SK-N-SH (cell line): ENCODE measurements at regions of chr1 and their contacts with region 1.

Region 1: GRCh38 chr1:23657659-23658275 is 33.8 kb upstream of the RPL11 start:
- DNase-seq: peak; percentile 79
- H3K4me3 ChIP-seq: peak overlapping the region in 1 of 2 experiments; percentile 43; a peak in 1 of 4 replicates
- H3K27ac ChIP-seq: no peak overlapping the region
- H3K4me1 ChIP-seq: no peaks in the 10 kb centered on the region
- H3K27me3 ChIP-seq: no peaks in the 10 kb centered on the region
- CTCF ChIP-seq: peak; percentile 89
- EP300 ChIP-seq: no peak
- RAD21 ChIP-seq: peak; percentile 60

Region 2: DNA sequence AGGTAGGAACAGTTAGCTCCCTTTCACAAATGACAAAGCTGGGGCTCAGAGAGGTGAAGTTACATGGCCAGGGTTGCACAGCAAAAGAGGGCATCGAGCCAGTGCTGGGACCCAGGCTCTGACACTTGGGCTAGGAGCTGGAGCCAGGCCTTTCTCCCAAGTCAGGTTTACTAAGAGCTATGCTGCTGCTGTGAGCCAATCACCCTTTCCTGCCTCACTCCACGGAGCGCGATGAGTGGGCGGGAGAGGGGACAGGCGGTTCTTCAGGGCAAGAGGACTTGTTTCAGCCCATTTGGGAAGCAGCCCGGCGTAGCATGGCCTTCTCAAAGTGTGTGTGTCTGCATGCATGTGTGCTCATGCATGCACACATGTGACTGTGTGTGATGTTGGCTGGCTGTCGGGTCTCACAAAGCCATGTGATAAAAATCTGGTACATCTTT is 109.0 kb before region 1 on chr1:
- CTCF ChIA-PET with region 1: interaction called, 11 read pairs
- POLR2A ChIA-PET with region 1: no interaction called
- DNase-seq: no peak
- H3K4me3 ChIP-seq: no peak overlapping the region
- H3K27ac ChIP-seq: no peak overlapping the region
- H3K4me1 ChIP-seq: peaks cover 7 to 28% of the 10 kb centered on the region in 2 experiments; a peak in 3 of 4 replicates
- H3K27me3 ChIP-seq: no peaks in the 10 kb centered on the region
- CTCF ChIP-seq: no peak
- EP300 ChIP-seq: no peak
- RAD21 ChIP-seq: no peak

Region 3: GRCh38 chr1:23643736-23644554 is 13.8 kb before region 1 on chr1:
- CTCF ChIA-PET with region 1: interaction called, 128 read pairs
- POLR2A ChIA-PET with region 1: no interaction called
- DNase-seq: no peak
- H3K4me3 ChIP-seq: no peak overlapping the region
- H3K27ac ChIP-seq: no peak overlapping the region; a peak in 1 of 4 replicates
- H3K4me1 ChIP-seq: peaks cover 0 to 19% of the 10 kb centered on the region in 2 experiments; a peak in 1 of 4 replicates
- H3K27me3 ChIP-seq: no peaks in the 10 kb centered on the region
- CTCF ChIP-seq: no peak
- EP300 ChIP-seq: no peak
- RAD21 ChIP-seq: no peak

Region 4: DNA sequence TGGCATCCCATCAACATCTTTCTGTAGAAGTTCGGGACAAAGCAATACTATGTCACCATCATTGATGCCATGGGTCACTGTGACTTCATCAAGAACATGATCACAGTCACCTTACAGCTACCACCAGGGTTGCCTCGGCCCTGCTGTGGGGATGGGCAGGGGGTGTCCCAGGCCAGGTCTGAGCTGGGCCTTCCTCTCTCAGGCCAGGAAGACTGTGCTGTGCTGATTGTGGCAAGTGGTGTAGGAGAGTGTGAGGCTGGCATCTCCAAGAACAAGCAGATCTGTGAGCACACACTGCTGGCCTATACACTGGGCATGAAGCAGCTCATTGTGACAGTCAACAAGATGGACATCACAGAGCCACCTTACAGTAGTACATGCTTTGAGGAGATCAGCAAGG is 12.9 kb after region 1 on chr1:
- CTCF ChIA-PET with region 1: interaction called, 40 read pairs
- POLR2A ChIA-PET with region 1: interaction called, 4 read pairs
- DNase-seq: no peak
- H3K4me3 ChIP-seq: no peak overlapping the region
- H3K27ac ChIP-seq: no peak overlapping the region
- H3K4me1 ChIP-seq: no peaks in the 10 kb centered on the region
- H3K27me3 ChIP-seq: no peaks in the 10 kb centered on the region; the same call in 1 of the 2 replicates
- CTCF ChIP-seq: no peak
- EP300 ChIP-seq: no peak
- RAD21 ChIP-seq: no peak

Region 5: GRCh38 chr1:23691499-23692307 is 33.9 kb after region 1 on chr1 and contains the start of gene RPL11:
- CTCF ChIA-PET with region 1: interaction called, 14 read pairs
- POLR2A ChIA-PET with region 1: no interaction called
- DNase-seq: peak; percentile 94
- H3K4me3 ChIP-seq: peak within 1 kb of the TSS; percentile 96 to 98
- H3K27ac ChIP-seq: peak within 1 kb of the TSS; percentile 82 to 92
- H3K4me1 ChIP-seq: peaks cover 19 to 34% of the 10 kb centered on the region in 2 experiments; a peak in 3 of 4 replicates
- H3K27me3 ChIP-seq: no peaks in the 10 kb centered on the region
- CTCF ChIP-seq: peak; percentile 70
- EP300 ChIP-seq: peak in 1 of 2 experiments; percentile 36; a peak in 2 of 4 replicates
- RAD21 ChIP-seq: peak; percentile 35
- polyA plus RNA-seq, gene RPL11: 2,231 and 2,255 TPM in 2 replicates